ENCODE measurements at regions of chr11 and their contacts with region 1.

Region 1: GRCh38 chr11:132472411-132473172 is 1059.7 kb downstream of the OPCML start:
- DNase-seq: no peak
- H3K4me3 ChIP-seq: no peak overlapping the region
- H3K27ac ChIP-seq: no peak overlapping the region
- H3K4me1 ChIP-seq: peaks cover 17% of the 10 kb centered on the region
- H3K27me3 ChIP-seq: no peaks in the 10 kb centered on the region
- CTCF ChIP-seq: no peak

Region 2: DNA sequence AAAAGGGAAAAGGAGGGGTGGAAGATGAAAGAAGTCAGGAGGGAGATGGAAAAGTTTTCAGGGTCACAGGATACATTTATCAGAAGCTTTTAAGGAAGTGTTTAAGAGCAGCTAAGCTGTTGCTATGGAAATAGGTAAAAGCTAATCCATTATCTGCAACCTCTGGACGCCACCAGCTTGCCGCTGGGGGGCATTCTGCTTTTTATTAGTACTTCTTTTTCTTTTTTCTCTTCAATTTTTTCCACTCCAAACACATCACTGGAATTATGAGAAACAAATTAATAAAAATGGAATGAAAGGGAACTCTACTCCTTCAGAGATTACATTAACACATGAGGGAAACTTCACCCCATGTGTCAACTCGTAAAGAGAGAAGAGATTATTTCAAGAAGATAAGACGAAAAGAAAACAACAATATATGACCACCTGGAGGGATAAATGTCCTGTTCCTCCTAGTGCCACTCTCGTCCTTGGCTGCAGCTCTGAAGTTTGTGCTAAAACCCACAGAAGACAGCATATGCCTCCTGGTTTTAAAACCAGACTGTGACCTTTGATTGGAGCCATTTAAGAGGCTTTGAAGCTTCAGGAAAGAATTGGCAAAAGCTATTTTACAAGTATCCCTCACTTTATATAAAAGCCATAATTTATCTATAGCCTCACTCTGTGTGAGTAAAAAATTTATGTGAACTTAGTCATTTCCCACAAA is 86.9 kb after region 1 on chr11:
- CTCF ChIA-PET with region 1: interaction called, 3 read pairs
- dilution Hi-C with region 1: no loop called
- in situ Hi-C with region 1: loop called in 1 of 2 experiments (anchors 25 kb)
- intact Hi-C with region 1: no loop called
- DNase-seq: no peak
- H3K4me3 ChIP-seq: no peak overlapping the region
- H3K27ac ChIP-seq: no peak overlapping the region
- H3K4me1 ChIP-seq: no peaks in the 10 kb centered on the region
- H3K27me3 ChIP-seq: no peaks in the 10 kb centered on the region
- CTCF ChIP-seq: no peak

Region 3: GRCh38 chr11:132632641-132633124 is 160.1 kb after region 1 on chr11:
- CTCF ChIA-PET with region 1: no interaction called
- dilution Hi-C with region 1: no loop called
- in situ Hi-C with region 1: no loop called
- intact Hi-C with region 1: loop called (anchors 1 kb)
- DNase-seq: peak; percentile 97
- H3K4me3 ChIP-seq: no peak overlapping the region
- H3K27ac ChIP-seq: peak overlapping the region; percentile 73
- H3K4me1 ChIP-seq: peaks cover 21% of the 10 kb centered on the region
- H3K27me3 ChIP-seq: no peaks in the 10 kb centered on the region
- CTCF ChIP-seq: no peak

Region 4: DNA sequence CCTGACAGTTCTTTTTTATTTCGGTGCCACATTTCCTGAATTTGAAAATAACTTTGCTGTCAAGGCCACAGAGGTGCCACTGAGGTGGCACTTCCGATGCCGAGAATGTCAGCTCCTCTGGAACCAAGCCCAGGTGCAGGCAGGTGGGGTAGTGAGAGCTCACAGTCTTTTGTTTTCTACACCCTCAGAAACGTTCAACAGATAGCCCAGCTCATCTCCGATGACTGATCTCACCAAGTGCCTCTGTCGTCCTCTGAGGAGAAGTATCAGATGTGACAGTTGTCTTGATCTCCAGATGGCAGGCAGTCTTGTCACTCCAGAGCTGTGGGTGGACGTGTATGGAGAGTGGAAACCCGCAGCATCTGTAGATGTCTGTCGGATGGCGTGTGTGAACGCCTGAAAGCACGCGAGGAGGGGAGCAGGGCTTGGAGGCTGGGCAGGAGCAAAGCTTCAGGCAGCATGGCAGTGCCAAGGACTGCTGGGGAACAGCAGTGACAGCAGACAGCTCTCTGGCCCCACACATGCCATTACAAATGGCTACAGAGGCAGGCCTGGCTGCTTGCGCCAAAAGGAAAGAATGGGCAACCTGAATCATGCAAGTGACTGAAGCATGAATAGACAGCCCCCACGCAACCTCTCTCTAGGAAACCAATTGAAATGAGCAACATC is 182.7 kb after region 1 on chr11:
- CTCF ChIA-PET with region 1: interaction called, 29 read pairs
- dilution Hi-C with region 1: no loop called
- in situ Hi-C with region 1: no loop called
- intact Hi-C with region 1: no loop called
- DNase-seq: no peak
- H3K4me3 ChIP-seq: no peak overlapping the region
- H3K27ac ChIP-seq: no peak overlapping the region
- H3K4me1 ChIP-seq: peaks cover 16% of the 10 kb centered on the region
- H3K27me3 ChIP-seq: no peaks in the 10 kb centered on the region
- CTCF ChIP-seq: no peak

Region 5: GRCh38 chr11:132734217-132734616 is 261.6 kb after region 1 on chr11:
- CTCF ChIA-PET with region 1: no interaction called
- dilution Hi-C with region 1: no loop called
- in situ Hi-C with region 1: no loop called
- intact Hi-C with region 1: loop called (anchors 10 kb)
- DNase-seq: peak; percentile 98
- H3K4me3 ChIP-seq: no peak overlapping the region
- H3K27ac ChIP-seq: no peak overlapping the region
- H3K4me1 ChIP-seq: peaks cover 10% of the 10 kb centered on the region
- H3K27me3 ChIP-seq: no peaks in the 10 kb centered on the region
- CTCF ChIP-seq: no peak

Region 6: DNA sequence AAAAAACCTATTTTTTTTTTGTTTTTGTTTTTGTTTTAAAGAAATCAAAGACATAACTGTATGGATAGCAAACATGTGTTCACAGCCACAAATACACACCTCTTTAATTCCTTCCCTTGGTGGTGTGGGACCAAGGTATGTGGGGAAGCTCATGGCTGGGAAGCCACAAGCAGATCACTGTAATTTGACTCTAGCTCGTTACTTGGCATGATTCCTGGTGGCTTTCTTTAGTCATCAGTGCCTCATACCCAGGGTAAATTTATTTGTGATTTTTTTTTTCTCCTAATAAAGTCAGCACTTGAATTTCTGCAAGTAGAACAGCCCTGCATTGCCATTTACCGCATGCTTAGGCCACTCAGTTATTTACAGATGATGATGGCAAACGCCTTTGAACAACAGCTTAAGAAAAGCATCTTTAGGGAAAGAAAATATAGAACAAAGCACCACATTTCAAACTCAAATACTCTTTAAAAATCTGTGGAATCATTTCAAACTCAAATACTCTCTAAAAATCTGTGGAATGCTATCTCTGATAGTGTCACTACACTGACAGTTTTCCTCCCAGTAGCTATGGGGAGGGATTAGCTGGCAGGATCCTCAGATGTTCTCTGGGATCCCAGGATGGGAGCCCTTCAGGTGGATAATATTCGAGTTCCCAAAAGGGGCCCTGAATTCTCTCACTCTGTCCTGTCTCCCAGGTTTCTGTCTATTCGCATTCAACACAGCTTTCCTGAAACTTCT is 372.5 kb after region 1 on chr11:
- CTCF ChIA-PET with region 1: no interaction called
- dilution Hi-C with region 1: no loop called
- in situ Hi-C with region 1: no loop called
- intact Hi-C with region 1: loop called (anchors 10 kb)
- DNase-seq: peak; percentile 90
- H3K4me3 ChIP-seq: no peak overlapping the region
- H3K27ac ChIP-seq: no peak overlapping the region
- H3K4me1 ChIP-seq: peaks cover 27% of the 10 kb centered on the region
- H3K27me3 ChIP-seq: no peaks in the 10 kb centered on the region
- CTCF ChIP-seq: no peak

Region 7: GRCh38 chr11:133064152-133064877 is 591.7 kb after region 1 on chr11:
- CTCF ChIA-PET with region 1: no interaction called
- dilution Hi-C with region 1: no loop called
- in situ Hi-C with region 1: no loop called
- intact Hi-C with region 1: loop called (anchors 10 kb)
- DNase-seq: peak; percentile 30
- H3K4me3 ChIP-seq: peak overlapping the region; percentile 52 to 58 (median 57)
- H3K27ac ChIP-seq: no peak overlapping the region
- H3K4me1 ChIP-seq: peaks cover 11% of the 10 kb centered on the region
- H3K27me3 ChIP-seq: no peaks in the 10 kb centered on the region
- CTCF ChIP-seq: peak; percentile 58 to 82